Activated B cell treated with CpG ODN at 0.5 μM for 24 hours (primary cell): ENCODE measurements at regions of chr19 and their contacts with region 1.

Region 1: DNA sequence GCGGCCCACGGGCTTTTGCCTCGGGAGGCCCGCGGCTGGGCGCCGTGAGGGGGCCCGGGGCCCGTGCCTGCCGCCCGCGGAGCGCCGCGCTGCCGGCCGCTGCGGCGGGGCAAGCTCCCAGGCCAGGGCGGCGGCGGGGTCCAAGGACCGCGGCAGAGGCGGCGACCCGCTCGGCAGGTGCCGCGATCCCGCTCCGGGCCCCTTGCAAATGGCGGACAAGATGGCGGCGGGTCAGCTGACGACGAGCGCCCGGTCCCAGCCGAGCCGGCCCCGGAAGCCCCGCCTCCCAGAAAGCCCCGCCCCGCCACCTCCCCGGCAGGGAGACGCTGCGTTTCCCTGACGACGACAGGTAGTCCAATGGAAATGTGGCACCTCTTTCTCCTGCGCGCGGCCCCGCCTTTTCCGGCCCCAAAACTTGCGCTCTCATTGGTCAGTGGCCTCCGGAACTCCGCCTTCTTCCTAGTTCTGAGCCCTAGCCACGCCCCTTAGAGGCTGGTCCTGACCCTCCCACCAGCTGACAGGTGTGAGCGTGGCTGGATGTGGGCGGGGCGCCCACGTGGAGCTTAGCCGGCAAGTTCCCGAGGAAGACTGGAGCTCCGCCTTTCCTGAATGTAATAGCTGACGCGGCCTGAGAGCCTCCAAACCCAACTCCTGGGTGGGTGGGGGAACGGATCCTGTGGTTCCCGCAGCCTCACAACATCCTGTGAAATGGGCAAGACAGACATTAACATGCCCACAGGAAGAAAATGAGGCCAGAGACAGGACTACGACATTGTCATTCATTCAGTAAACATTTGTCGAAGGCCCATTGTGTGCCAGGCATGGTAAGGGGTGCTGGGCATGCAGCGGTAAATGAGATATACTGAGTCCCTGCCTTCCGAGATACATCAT is at the start of gene AP3D1:
- DNase-seq: peak; percentile 99
- ATAC-seq: peak; percentile 92
- H3K4me3 Mint-ChIP-seq: peak within 1 kb of the TSS; percentile 83
- H3K27ac Mint-ChIP-seq: peak within 1 kb of the TSS; percentile 70
- H3K4me1 Mint-ChIP-seq: peaks cover 41% of the 10 kb centered on the region
- H3K27me3 Mint-ChIP-seq: no peaks in the 10 kb centered on the region
- CTCF ChIP-seq: no peak
- total RNA-seq, gene AP3D1: 97.2 and 109 TPM in 2 replicates

Region 2: GRCh38 chr19:2050991-2051772 is 100.4 kb before region 1 on chr19 and contains the start of gene MKNK2:
- CTCF ChIA-PET with region 1: interaction called, 3 read pairs
- POLR2A ChIA-PET with region 1: interaction called, 6 read pairs
- intact Hi-C with region 1: loop called (anchors 1 kb)
- DNase-seq: peak; percentile 99
- ATAC-seq: peak; percentile 61
- H3K4me3 Mint-ChIP-seq: peak within 1 kb of the TSS; percentile 93
- H3K27ac Mint-ChIP-seq: peak within 1 kb of the TSS; percentile 97
- H3K4me1 Mint-ChIP-seq: peaks cover 77% of the 10 kb centered on the region
- H3K27me3 Mint-ChIP-seq: no peaks in the 10 kb centered on the region
- CTCF ChIP-seq: no peak
- total RNA-seq, gene MKNK2: 1,134 and 1,197 TPM in 2 replicates

Region 3: GRCh38 chr19:2186071-2186846 is 34.7 kb after region 1 on chr19:
- CTCF ChIA-PET with region 1: interaction called, 6 read pairs
- POLR2A ChIA-PET with region 1: interaction called, 4 read pairs
- intact Hi-C with region 1: loop called (anchors 5 kb)
- DNase-seq: no peak
- ATAC-seq: no peak
- H3K4me3 Mint-ChIP-seq: no peak overlapping the region
- H3K27ac Mint-ChIP-seq: no peak overlapping the region
- H3K4me1 Mint-ChIP-seq: peaks cover 64% of the 10 kb centered on the region
- H3K27me3 Mint-ChIP-seq: no peaks in the 10 kb centered on the region
- CTCF ChIP-seq: no peak

Region 4: DNA sequence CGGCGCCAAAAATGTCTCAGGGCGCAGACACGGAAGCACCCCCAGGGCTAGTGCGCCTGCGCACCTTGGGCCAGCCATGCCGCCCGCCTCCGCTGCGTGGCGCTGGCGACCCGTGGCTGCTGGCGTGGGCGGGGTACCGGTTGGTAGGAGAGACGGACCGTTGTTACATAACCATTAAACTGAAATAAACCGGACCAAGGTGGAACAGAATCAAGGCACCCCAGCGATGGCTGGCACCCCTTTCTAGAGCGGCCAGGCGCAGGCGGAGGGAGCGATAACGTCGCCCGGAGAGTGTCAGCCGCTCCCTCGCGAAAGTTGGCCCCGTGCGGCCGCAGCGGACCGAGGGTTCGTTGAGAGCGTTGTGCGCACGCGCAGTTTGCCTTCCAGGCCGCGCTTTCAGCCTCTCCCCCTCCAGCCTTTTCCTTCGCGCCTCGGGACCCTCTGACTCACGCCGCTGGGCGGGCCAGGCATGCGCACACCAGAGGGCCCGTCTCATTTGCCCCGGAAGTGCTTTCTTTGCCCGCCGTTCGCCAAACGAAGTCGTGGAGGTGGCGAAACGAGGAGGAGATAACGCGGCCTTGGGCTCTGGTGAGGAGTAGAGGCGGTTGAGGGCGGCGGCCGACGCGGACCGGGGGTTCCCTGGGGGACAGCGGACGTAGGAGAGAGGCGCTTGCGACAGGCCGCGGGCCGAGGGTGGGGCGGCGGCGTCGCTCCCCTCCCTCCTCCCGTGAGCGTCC is 84.9 kb after region 1 on chr19 and contains the starts of genes PLEKHJ1 and SF3A2:
- CTCF ChIA-PET with region 1: interaction called, 6 read pairs
- POLR2A ChIA-PET with region 1: interaction called, 17 read pairs
- intact Hi-C with region 1: loop called (anchors 1 kb)
- DNase-seq: peak; percentile 100
- ATAC-seq: peak; percentile 82
- H3K4me3 Mint-ChIP-seq: peak within 1 kb of the TSS; percentile 99
- H3K27ac Mint-ChIP-seq: peak within 1 kb of the TSS; percentile 99
- H3K4me1 Mint-ChIP-seq: peaks cover 69% of the 10 kb centered on the region
- H3K27me3 Mint-ChIP-seq: no peaks in the 10 kb centered on the region
- CTCF ChIP-seq: no peak
- total RNA-seq, gene PLEKHJ1: 74.4 and 74.9 TPM in 2 replicates
- total RNA-seq, gene SF3A2: 107 and 117 TPM in 2 replicates

Region 5: GRCh38 chr19:2328401-2329148 is 177.0 kb after region 1 on chr19 and contains the starts of genes LSM7 and SPPL2B:
- CTCF ChIA-PET with region 1: no interaction called
- POLR2A ChIA-PET with region 1: interaction called, 3 read pairs
- intact Hi-C with region 1: loop called (anchors 5 kb)
- DNase-seq: peak; percentile 97
- ATAC-seq: peak; percentile 52
- H3K4me3 Mint-ChIP-seq: peak within 1 kb of the TSS; percentile 100
- H3K27ac Mint-ChIP-seq: peak within 1 kb of the TSS; percentile 99
- H3K4me1 Mint-ChIP-seq: peaks cover 86% of the 10 kb centered on the region
- H3K27me3 Mint-ChIP-seq: no peaks in the 10 kb centered on the region
- CTCF ChIP-seq: no peak
- total RNA-seq, gene LSM7: 149 and 152 TPM in 2 replicates
- total RNA-seq, gene SPPL2B: 112 and 142 TPM in 2 replicates

Region 6: GRCh38 chr19:2627319-2627829 is 475.8 kb after region 1 on chr19:
- CTCF ChIA-PET with region 1: no interaction called
- POLR2A ChIA-PET with region 1: no interaction called
- intact Hi-C with region 1: loop called (anchors 5 kb)
- DNase-seq: peak; percentile 68
- ATAC-seq: peak; percentile 62
- H3K4me3 Mint-ChIP-seq: peak overlapping the region; percentile 76
- H3K27ac Mint-ChIP-seq: peak overlapping the region; percentile 94
- H3K4me1 Mint-ChIP-seq: peaks cover 95% of the 10 kb centered on the region
- H3K27me3 Mint-ChIP-seq: no peaks in the 10 kb centered on the region
- CTCF ChIP-seq: no peak